CD8-positive, alpha-beta T cell (primary cell): ENCODE measurements at regions of chr11 and their contacts with region 1.

Region 1: GRCh38 chr11:10906513-10906912 is 48.7 kb upstream of the ZBED5 start:
- DNase-seq: peak in 2 of 9 experiments; percentile 12 to 20
- ATAC-seq: no peak
- H3K4me3 ChIP-seq: no peak overlapping the region
- H3K4me3 Mint-ChIP-seq: no peak overlapping the region
- H3K27ac ChIP-seq: no peak overlapping the region
- H3K27ac Mint-ChIP-seq: no peak overlapping the region
- H3K4me1 ChIP-seq: no peaks in the 10 kb centered on the region
- H3K4me1 Mint-ChIP-seq: no peaks in the 10 kb centered on the region
- H3K27me3 ChIP-seq: no peaks in the 10 kb centered on the region
- H3K27me3 Mint-ChIP-seq: peaks cover 4% of the 10 kb centered on the region
- CTCF ChIP-seq: no peak

Region 2: DNA sequence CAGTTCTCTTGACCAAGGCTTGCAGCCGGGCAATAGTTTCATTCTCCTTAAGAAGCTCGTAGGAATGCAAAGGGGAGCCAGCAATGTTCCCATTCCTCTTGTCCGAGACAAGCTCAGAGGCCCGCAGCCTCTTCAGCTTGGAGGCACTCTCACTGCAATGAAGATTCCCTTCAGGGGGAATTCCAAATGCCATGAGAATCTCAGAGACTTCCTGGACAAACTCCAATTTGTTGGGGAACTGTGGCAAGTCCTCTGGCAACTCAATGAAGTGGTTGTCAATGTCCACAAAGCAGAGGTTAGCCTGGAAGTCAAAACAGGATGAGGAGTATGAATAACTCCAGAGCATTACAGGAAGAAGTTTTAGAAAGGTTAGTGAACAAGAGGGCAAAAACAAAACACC is 1725.7 kb before region 1 on chr11:
- CTCF ChIA-PET with region 1: no interaction called
- POLR2A ChIA-PET with region 1: no interaction called
- intact Hi-C with region 1: no loop called
- DNase-seq: no peak
- ATAC-seq: no peak
- H3K4me3 ChIP-seq: no peak overlapping the region
- H3K4me3 Mint-ChIP-seq: no peak overlapping the region
- H3K27ac ChIP-seq: no peak overlapping the region
- H3K27ac Mint-ChIP-seq: peak overlapping the region; percentile 50
- H3K4me1 ChIP-seq: no peaks in the 10 kb centered on the region
- H3K4me1 Mint-ChIP-seq: peaks cover 1% of the 10 kb centered on the region
- H3K27me3 ChIP-seq: no peaks in the 10 kb centered on the region
- H3K27me3 Mint-ChIP-seq: no peaks in the 10 kb centered on the region
- CTCF ChIP-seq: no peak

Region 3: DNA sequence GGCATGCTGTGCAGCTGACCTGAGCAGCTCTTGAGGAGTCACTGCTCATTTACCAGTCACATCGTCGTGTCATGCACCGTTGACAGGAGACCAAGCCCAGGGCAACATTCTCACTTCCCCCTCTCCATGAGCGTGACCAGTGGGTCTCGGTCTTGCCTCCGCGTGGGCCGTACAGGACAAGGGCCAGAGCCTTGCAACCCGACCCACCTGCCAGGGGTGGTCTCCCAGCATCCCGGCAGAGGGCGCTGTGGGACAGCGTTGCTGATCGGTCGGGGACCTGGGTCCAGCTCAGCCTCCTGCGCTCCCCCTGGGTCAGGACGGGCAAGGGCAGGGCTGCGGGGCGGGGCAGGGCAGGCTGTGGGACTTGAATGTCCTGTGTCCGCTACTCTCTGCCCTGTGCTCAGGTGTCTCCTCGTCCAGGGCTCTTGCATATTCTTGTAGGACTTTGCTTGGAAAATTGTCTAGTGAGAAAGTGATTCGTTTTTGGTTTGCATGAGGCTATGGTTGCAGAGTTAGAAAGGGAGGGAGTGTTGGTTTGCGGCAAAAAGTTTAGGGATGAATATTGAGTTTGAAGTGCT is 114.0 kb before region 1 on chr11:
- CTCF ChIA-PET with region 1: interaction called, 28 read pairs
- POLR2A ChIA-PET with region 1: no interaction called
- intact Hi-C with region 1: loop called (anchors 1 to 2 kb)
- DNase-seq: peak; percentile 65 to 91 (median 85)
- ATAC-seq: peak; percentile 88
- H3K4me3 ChIP-seq: no peak overlapping the region
- H3K4me3 Mint-ChIP-seq: no peak overlapping the region
- H3K27ac ChIP-seq: no peak overlapping the region
- H3K27ac Mint-ChIP-seq: no peak overlapping the region
- H3K4me1 ChIP-seq: peaks cover 24% of the 10 kb centered on the region
- H3K4me1 Mint-ChIP-seq: peaks cover 31% of the 10 kb centered on the region
- H3K27me3 ChIP-seq: peaks cover 0 to 5% of the 10 kb centered on the region in 2 experiments
- H3K27me3 Mint-ChIP-seq: peaks cover 3% of the 10 kb centered on the region
- CTCF ChIP-seq: peak; percentile 90

Region 4: GRCh38 chr11:10878408-10879214 is 27.9 kb before region 1 on chr11:
- CTCF ChIA-PET with region 1: interaction called, 8 read pairs
- POLR2A ChIA-PET with region 1: no interaction called
- intact Hi-C with region 1: loop called in 1 of 2 experiments (anchors 2 kb)
- DNase-seq: peak in 3 of 9 experiments; percentile 33 to 79 (median 73)
- ATAC-seq: peak; percentile 75
- H3K4me3 ChIP-seq: no peak overlapping the region
- H3K4me3 Mint-ChIP-seq: no peak overlapping the region
- H3K27ac ChIP-seq: no peak overlapping the region
- H3K27ac Mint-ChIP-seq: no peak overlapping the region
- H3K4me1 ChIP-seq: peaks cover 5% of the 10 kb centered on the region
- H3K4me1 Mint-ChIP-seq: peaks cover 18% of the 10 kb centered on the region
- H3K27me3 ChIP-seq: no peaks in the 10 kb centered on the region
- H3K27me3 Mint-ChIP-seq: no peaks in the 10 kb centered on the region
- CTCF ChIP-seq: peak; percentile 75

Region 5: DNA sequence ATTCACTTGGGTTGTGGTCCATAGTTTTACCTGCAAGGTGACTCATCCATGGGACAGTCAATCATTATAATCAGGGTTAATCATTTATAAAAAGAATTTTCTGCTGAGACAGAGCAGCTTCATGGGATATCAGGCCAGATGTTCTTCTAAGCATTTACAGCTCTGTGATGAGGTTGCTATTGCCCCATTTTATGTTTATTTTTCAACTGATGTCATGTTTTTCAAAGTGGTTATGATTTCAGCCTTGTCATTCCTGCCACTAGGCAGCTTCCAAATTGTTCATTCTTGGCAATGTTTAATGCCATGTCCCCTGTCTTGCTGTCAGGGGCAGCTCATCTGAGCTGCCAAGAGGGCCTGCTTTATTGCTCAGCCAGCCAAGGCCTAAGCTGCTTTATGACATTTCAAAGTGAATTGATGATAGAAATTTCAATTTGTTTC is 12.8 kb before region 1 on chr11:
- CTCF ChIA-PET with region 1: interaction called, 10 read pairs
- POLR2A ChIA-PET with region 1: interaction called, 3 read pairs
- intact Hi-C with region 1: no loop called
- DNase-seq: no peak
- ATAC-seq: no peak
- H3K4me3 ChIP-seq: no peak overlapping the region
- H3K4me3 Mint-ChIP-seq: no peak overlapping the region
- H3K27ac ChIP-seq: no peak overlapping the region
- H3K27ac Mint-ChIP-seq: no peak overlapping the region
- H3K4me1 ChIP-seq: no peaks in the 10 kb centered on the region
- H3K4me1 Mint-ChIP-seq: no peaks in the 10 kb centered on the region
- H3K27me3 ChIP-seq: no peaks in the 10 kb centered on the region
- H3K27me3 Mint-ChIP-seq: no peaks in the 10 kb centered on the region
- CTCF ChIP-seq: no peak

Region 6: DNA sequence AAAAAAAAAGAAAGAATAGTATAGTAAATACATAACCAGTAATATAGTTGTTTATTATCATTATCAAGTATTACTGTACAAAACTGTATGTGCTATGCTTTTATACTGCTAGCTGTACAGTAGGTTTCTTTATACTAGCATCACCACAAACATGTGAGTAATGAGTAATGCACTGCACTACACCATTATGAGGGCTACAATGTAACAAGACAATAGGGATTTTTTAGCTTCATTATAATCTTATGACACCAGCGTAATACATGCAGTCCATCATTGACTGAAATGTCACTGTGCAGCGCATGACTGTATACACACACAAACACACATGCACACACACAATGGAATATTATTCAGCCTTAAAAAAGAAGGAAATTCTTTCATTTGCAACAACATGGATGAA is 62.9 kb after region 1 on chr11:
- CTCF ChIA-PET with region 1: no interaction called
- POLR2A ChIA-PET with region 1: no interaction called
- intact Hi-C with region 1: no loop called
- DNase-seq: no peak
- ATAC-seq: no peak
- H3K4me3 ChIP-seq: no peak overlapping the region
- H3K4me3 Mint-ChIP-seq: no peak overlapping the region
- H3K27ac ChIP-seq: no peak overlapping the region
- H3K27ac Mint-ChIP-seq: no peak overlapping the region
- H3K4me1 ChIP-seq: no peaks in the 10 kb centered on the region
- H3K4me1 Mint-ChIP-seq: no peaks in the 10 kb centered on the region
- H3K27me3 ChIP-seq: no peaks in the 10 kb centered on the region
- H3K27me3 Mint-ChIP-seq: peaks cover 4% of the 10 kb centered on the region
- CTCF ChIP-seq: no peak